Heart left ventricle (tissue), 16 donors: ENCODE measurements at regions of chr17 and their contacts with region 1.

Region 1: GRCh38 chr17:44689477-44690217 is at the start of gene CCDC43:
- DNase-seq: peak; percentile 85 to 95 (median 92)
- ATAC-seq: peak; percentile 95 to 100 (median 100)
- H3K4me3 ChIP-seq: peak within 1 kb of the TSS; percentile 61 to 98 (median 85)
- H3K27ac ChIP-seq: peak within 1 kb of the TSS in 11 of 12 donors; percentile 44 to 89 (median 79)
- H3K4me1 ChIP-seq: peaks cover 0 to 25% (median 15%) of the 10 kb centered on the region in 12 donors
- H3K27me3 ChIP-seq: no peaks in the 10 kb centered on the region
- CTCF ChIP-seq: no peak
- POLR2A ChIP-seq: peak in 1 of 2 donors; percentile 54
- total RNA-seq, gene CCDC43: 19.0 to 32.9 (median 29.0) TPM

Region 2: GRCh38 chr17:44628243-44629188 is 61.1 kb before region 1 on chr17:
- intact Hi-C with region 1: no loop called
- DNase-seq: peak; percentile 49 to 84 (median 68)
- ATAC-seq: peak; percentile 51 to 88 (median 76)
- H3K4me3 ChIP-seq: peak overlapping the region in 9 of 12 donors; percentile 5 to 52 (median 33)
- H3K27ac ChIP-seq: peak overlapping the region in 5 of 12 donors; percentile 39 to 80 (median 73)
- H3K4me1 ChIP-seq: peaks cover 0 to 11% (median 0%) of the 10 kb centered on the region in 12 donors
- H3K27me3 ChIP-seq: peaks cover 0 to 2% (median 0%) of the 10 kb centered on the region in 9 donors
- CTCF ChIP-seq: no peak
- POLR2A ChIP-seq: no peak

Region 3: DNA sequence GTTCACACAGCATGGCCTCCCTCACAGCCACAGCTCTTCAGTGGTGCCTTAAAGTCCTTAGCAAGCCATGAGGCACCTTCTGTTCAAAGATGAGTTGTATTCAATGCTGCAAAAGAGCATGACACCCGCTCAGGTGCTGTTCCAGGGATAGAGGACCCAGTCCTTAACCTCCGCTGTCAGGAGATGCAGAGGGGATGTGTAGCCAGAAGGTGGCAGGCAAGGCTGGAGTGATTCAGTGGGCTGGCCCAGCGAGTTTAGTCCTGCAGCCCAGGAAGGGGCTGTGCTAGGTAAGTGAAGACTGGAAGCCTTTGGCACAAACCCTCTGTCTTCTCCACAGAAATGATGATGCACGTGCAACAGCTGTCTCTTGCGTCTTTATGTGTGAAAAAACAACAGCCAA is 44.1 kb after region 1 on chr17:
- intact Hi-C with region 1: no loop called
- DNase-seq: peak in 1 of 5 donors; percentile 37
- ATAC-seq: peak; percentile 58 to 81 (median 65)
- H3K4me3 ChIP-seq: no peak overlapping the region
- H3K27ac ChIP-seq: no peak overlapping the region
- H3K4me1 ChIP-seq: no peaks in the 10 kb centered on the region
- H3K27me3 ChIP-seq: no peaks in the 10 kb centered on the region
- CTCF ChIP-seq: peak in 7 of 12 donors; percentile 16 to 46 (median 33)
- POLR2A ChIP-seq: no peak

Region 4: DNA sequence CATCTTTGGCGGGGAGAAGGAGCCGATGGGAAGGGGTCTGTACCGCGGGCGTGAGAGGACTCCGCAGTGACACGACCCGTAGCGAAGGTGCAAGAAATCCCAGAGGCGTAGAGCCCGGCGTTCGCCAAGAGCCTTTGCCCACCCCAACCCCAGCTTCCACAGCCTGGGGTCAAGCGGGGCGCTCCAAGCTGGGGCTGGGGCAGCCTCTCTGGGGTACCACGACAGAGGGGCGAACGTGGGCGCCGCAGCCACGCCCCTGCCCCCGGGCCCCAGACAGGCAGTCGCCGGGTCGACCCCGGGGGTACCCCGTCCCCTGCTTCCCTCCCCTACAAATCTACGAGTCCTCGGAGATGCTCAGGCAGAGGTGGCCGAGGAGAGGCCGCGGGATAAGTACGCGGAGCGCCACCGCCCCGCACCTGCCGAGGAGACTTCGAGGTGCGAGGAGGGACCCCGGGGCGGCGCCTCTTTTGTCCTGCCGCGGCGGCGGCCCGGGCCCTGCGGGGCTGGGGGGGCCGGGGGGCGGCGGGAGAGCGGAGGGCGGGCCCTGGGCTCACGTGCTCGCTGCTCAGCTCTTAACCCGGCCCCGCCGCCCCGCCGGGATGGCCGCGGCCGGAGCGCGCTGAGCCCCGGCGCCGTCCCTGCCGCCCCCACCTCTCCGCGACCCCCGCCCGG is 68.9 kb after region 1 on chr17 and contains the start of gene ADAM11:
- intact Hi-C with region 1: loop called in 1 of 10 experiments (anchors 10 kb)
- DNase-seq: peak in 1 of 5 donors; percentile 33
- ATAC-seq: peak in 2 of 4 donors; percentile 4 to 53
- H3K4me3 ChIP-seq: peak within 1 kb of the TSS; percentile 29 to 64 (median 54)
- H3K27ac ChIP-seq: peak within 1 kb of the TSS in 5 of 12 donors; percentile 14 to 55 (median 33)
- H3K4me1 ChIP-seq: peaks cover 0 to 28% (median 9%) of the 10 kb centered on the region in 12 donors
- H3K27me3 ChIP-seq: peaks cover 4 to 32% (median 13%) of the 10 kb centered on the region in 9 donors
- CTCF ChIP-seq: no peak
- POLR2A ChIP-seq: no peak
- total RNA-seq, gene ADAM11: 6.6 to 24.6 (median 12.6) TPM